Activated T-helper 1 cell treated with anti-CD3 and anti-CD28 coated beads, Interleukin-12 subunit alpha, Interleukin-12 subunit beta, Interleukin-2, Interleukin-4 antibody, amounts not matched to agents 30 ng/mL and 10 ng/mL and 1 ng/mL, durations not matched to agents 14 hours and 24 hours and 36 hours (primary cell): ENCODE measurements at regions of chr7 and their contacts with region 1.

Region 1: GRCh38 chr7:101173752-101174244 is 6.3 kb downstream of the NAT16 start:
- DNase-seq: peak; percentile 69
- H3K4me3 Mint-ChIP-seq: peak overlapping the region; percentile 65
- H3K27ac Mint-ChIP-seq: no peak overlapping the region
- H3K4me1 Mint-ChIP-seq: peaks cover 40% of the 10 kb centered on the region
- H3K27me3 Mint-ChIP-seq: peaks cover 85% of the 10 kb centered on the region

Region 2: GRCh38 chr7:101185258-101185839 is 11.6 kb after region 1 on chr7:
- intact Hi-C with region 1: loop called (anchors 1 kb)
- DNase-seq: no peak
- H3K4me3 Mint-ChIP-seq: no peak overlapping the region
- H3K27ac Mint-ChIP-seq: no peak overlapping the region
- H3K4me1 Mint-ChIP-seq: peaks cover 9% of the 10 kb centered on the region
- H3K27me3 Mint-ChIP-seq: peaks cover 27% of the 10 kb centered on the region